Calu3 (cell line): ENCODE measurements at regions of chr12 and their contacts with region 1.

Region 1: GRCh38 chr12:106037524-106038298 is 101.0 kb downstream of the NUAK1 start:
- DNase-seq: no peak
- H3K4me3 Mint-ChIP-seq: no peak overlapping the region
- H3K27ac Mint-ChIP-seq: no peak overlapping the region
- H3K4me1 Mint-ChIP-seq: no peaks in the 10 kb centered on the region
- H3K27me3 Mint-ChIP-seq: no peaks in the 10 kb centered on the region
- CTCF ChIP-seq: no peak

Region 2: GRCh38 chr12:105600911-105601545 is 436.7 kb before region 1 on chr12:
- CTCF ChIA-PET with region 1: interaction called, 12 read pairs
- intact Hi-C with region 1: no loop called
- DNase-seq: no peak
- H3K4me3 Mint-ChIP-seq: no peak overlapping the region
- H3K27ac Mint-ChIP-seq: no peak overlapping the region
- H3K4me1 Mint-ChIP-seq: no peaks in the 10 kb centered on the region
- H3K27me3 Mint-ChIP-seq: peaks cover 42% of the 10 kb centered on the region
- CTCF ChIP-seq: no peak

Region 3: DNA sequence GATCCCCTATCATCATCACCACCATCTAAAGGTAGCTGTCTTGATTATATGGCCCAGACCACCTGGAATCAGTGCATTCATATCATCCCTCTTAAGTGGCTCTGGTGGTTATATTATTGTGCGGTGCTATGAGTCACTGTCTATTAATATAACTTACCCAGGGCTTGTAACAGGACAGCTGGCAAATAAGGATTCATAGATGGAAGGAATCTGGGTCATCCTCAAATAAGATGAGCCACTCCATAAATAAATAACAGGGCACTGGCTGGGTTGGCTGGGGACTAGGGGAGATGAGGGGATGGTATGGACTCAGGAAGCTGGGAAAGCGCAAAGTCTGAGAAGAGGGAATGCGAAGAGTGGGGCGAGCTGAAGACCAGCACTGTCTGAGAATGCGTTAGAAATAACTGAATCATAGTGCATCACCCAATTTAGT is 115.0 kb before region 1 on chr12:
- CTCF ChIA-PET with region 1: no interaction called
- intact Hi-C with region 1: no loop called
- DNase-seq: no peak
- H3K4me3 Mint-ChIP-seq: no peak overlapping the region
- H3K27ac Mint-ChIP-seq: no peak overlapping the region
- H3K4me1 Mint-ChIP-seq: no peaks in the 10 kb centered on the region
- H3K27me3 Mint-ChIP-seq: peaks cover 10% of the 10 kb centered on the region
- CTCF ChIP-seq: no peak

Region 4: GRCh38 chr12:105960319-105961083 is 77.2 kb before region 1 on chr12:
- CTCF ChIA-PET with region 1: no interaction called
- intact Hi-C with region 1: no loop called
- DNase-seq: peak; percentile 23
- H3K4me3 Mint-ChIP-seq: no peak overlapping the region
- H3K27ac Mint-ChIP-seq: no peak overlapping the region
- H3K4me1 Mint-ChIP-seq: no peaks in the 10 kb centered on the region
- H3K27me3 Mint-ChIP-seq: peaks cover 54% of the 10 kb centered on the region
- CTCF ChIP-seq: no peak

Region 5: GRCh38 chr12:105970885-105971284 is 66.8 kb before region 1 on chr12:
- CTCF ChIA-PET with region 1: no interaction called
- intact Hi-C with region 1: no loop called
- DNase-seq: no peak
- H3K4me3 Mint-ChIP-seq: no peak overlapping the region
- H3K27ac Mint-ChIP-seq: no peak overlapping the region
- H3K4me1 Mint-ChIP-seq: no peaks in the 10 kb centered on the region
- H3K27me3 Mint-ChIP-seq: peaks cover 33% of the 10 kb centered on the region
- CTCF ChIP-seq: no peak

Region 6: DNA sequence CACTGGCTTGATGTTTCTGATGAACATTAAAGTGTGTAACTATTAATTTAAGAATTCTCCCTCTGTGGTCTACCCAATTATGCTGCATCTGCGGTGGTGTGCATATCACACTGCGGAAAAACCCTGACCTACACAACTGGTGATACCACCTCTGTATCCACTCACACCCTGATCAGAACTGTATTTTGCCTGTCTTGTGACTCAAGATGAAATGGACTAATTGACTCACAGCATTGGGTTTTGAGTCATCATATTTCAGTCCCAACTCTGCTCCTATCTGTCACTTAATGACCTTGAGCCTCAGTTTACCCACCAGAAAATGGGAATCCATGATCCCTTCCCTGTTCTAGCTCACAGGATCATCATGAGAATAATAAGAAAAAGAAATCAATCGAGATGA is 35.5 kb after region 1 on chr12:
- CTCF ChIA-PET with region 1: no interaction called
- intact Hi-C with region 1: no loop called
- DNase-seq: no peak
- H3K4me3 Mint-ChIP-seq: no peak overlapping the region
- H3K27ac Mint-ChIP-seq: no peak overlapping the region
- H3K4me1 Mint-ChIP-seq: no peaks in the 10 kb centered on the region
- H3K27me3 Mint-ChIP-seq: no peaks in the 10 kb centered on the region
- CTCF ChIP-seq: no peak